Heart right ventricle (tissue), 16 donors: ENCODE measurements at regions of chr1 and their contacts with region 1.

Region 1: GRCh38 chr1:54355931-54356679 is 50.1 kb downstream of the SSBP3 start:
- DNase-seq: no peak
- ATAC-seq: no peak
- H3K4me3 ChIP-seq: peak overlapping the region in 6 of 10 donors; percentile 3 to 40 (median 16)
- H3K27ac ChIP-seq: peak overlapping the region in 4 of 10 donors; percentile 10 to 48 (median 38)
- H3K4me1 ChIP-seq: peaks cover 17 to 88% (median 62%) of the 10 kb centered on the region in 9 donors
- H3K27me3 ChIP-seq: no peaks in the 10 kb centered on the region
- CTCF ChIP-seq: no peak

Region 2: DNA sequence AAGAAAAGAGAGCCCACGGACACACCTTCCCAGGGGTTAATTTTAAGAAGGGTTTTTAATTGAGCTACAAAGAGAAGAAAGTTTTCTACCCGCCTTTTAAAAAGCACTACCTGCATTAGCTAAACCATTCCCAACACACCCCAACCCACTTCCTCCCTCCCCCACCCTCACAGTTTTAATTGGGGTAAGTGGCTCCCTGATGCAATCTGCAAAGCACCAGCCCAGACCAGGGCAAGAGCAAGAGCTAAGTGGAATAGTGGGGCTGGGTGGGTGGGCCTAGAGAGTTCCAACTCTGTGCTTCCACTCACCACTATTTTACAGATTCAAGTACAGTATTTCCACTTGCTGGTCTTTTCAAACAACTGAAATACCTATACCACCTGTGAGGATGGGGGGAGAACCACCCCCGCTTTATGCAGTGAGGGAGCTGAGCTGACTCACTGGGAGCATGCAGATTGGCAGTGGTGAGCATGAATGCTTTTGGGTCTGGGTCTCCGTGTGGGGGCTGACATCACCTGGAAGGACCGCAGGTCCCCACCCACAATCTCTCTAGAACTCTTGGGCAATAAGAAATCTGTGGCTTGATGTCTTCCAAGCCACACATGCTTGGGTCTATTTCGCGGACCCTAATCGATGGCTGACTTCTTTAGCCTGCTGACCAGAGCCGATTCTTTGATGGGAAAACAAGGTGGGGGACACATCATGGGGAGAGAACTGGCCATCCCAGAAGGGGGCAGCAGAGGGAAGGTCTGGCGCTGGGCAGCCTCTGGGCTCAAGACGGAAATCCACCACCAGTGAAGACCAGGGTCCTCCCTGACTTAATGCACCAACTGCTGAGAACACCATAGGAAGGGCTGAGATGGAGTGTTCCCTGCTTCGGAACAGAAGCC is 45.4 kb before region 1 on chr1:
- intact Hi-C with region 1: loop called in 1 of 10 experiments (anchors 5 kb)
- DNase-seq: peak; percentile 57 to 68
- ATAC-seq: peak in 6 of 8 donors; percentile 22 to 52 (median 43)
- H3K4me3 ChIP-seq: no peak overlapping the region
- H3K27ac ChIP-seq: peak overlapping the region in 6 of 10 donors; percentile 19 to 88 (median 74)
- H3K4me1 ChIP-seq: peaks cover 14 to 92% (median 83%) of the 10 kb centered on the region in 9 donors
- H3K27me3 ChIP-seq: no peaks in the 10 kb centered on the region
- CTCF ChIP-seq: peak; percentile 16 to 71 (median 67)

Region 3: DNA sequence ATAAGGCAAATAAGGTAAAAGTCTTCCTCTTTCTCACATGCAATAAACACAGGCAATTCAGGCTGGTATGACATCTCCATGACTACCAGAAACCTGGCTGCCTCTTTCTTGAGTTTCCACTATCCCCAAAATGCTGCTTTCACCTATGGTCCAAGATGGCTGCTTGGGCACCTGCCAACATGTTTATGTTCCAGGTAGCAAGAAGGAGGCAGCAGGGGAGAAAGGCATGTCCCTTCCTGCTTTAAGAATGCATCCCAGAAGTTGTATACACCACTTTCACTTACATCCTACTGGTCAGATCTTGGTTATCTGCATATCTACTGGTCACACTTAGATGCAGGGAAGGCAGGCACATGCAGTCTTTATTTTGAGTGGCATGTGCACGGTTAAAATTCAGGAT is 172.5 kb after region 1 on chr1:
- intact Hi-C with region 1: no loop called
- DNase-seq: no peak
- ATAC-seq: no peak
- H3K4me3 ChIP-seq: no peak overlapping the region
- H3K27ac ChIP-seq: no peak overlapping the region
- H3K4me1 ChIP-seq: no peaks in the 10 kb centered on the region
- H3K27me3 ChIP-seq: no peaks in the 10 kb centered on the region
- CTCF ChIP-seq: no peak